Activated T-helper 2 cell treated with anti-CD3 and anti-CD28 coated beads, Interferon-gamma antibody, Interleukin-2, Interleukin-4, amounts not matched to agents 10 μg/mL and 5 μg/mL and 100 μg/mL, durations not matched to agents 14 hours and 24 hours and 36 hours (primary cell): ENCODE measurements at regions of chr11 and their contacts with region 1.

Region 1: DNA sequence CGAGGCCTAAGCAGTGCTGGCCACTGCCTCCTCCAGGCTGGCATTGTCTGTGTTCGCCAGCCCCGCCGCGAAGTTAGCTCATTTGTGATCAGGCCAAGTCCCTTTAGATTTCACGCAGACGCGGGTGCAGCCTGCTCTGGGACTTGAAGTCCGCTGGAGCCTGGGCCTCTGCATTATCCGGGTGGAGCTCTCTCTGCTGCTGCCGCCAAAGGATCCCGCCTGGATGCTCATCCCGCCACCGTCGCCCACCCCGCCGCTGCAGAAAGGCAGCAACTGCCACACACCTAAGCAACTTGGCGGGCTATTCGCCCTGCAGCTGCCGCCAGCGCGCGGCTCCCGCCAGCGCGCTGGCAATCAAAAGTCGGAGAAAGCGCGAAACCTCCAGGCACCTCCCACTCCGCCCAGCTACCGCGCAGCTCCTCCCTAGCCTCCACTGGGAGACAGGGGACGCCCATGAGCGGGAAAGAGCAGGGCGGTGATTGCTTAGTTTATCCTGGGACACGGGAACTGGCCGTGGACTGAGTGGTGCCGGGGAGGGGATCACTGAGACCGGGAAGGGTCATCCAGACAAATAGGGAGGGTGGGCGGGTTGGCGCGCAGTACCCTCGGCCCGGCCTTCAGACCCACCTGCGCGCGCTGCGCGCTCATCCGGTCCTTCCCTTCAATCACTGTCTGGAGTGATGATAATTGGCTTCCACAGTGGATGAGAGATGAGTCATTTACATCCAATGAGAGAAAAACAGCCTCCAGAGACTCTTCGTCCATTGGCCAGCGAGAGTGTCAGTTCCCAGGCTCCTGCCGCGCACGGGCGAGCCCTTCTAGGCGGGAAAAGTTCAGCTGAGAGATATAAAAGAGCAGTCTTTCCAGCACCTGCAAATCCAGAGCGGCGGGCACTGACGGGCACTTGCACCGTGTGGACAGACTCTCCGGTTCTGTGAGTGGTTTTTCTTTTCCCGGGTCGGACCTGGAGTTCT is at the start of gene FAM111B:
- DNase-seq: peak; percentile 79
- H3K4me3 Mint-ChIP-seq: peak within 1 kb of the TSS; percentile 93
- H3K27ac Mint-ChIP-seq: peak within 1 kb of the TSS; percentile 51
- H3K4me1 Mint-ChIP-seq: peaks cover 66% of the 10 kb centered on the region
- H3K27me3 Mint-ChIP-seq: no peaks in the 10 kb centered on the region
- total RNA-seq, gene FAM111B: 57.6 and 59.4 TPM in 2 replicates

Region 2: GRCh38 chr11:59053387-59053786 is 53.3 kb before region 1 on chr11:
- intact Hi-C with region 1: loop called (anchors 5 kb)
- DNase-seq: peak; percentile 54
- H3K4me3 Mint-ChIP-seq: no peak overlapping the region
- H3K27ac Mint-ChIP-seq: no peak overlapping the region
- H3K4me1 Mint-ChIP-seq: peaks cover 4% of the 10 kb centered on the region
- H3K27me3 Mint-ChIP-seq: peaks cover 23% of the 10 kb centered on the region

Region 3: DNA sequence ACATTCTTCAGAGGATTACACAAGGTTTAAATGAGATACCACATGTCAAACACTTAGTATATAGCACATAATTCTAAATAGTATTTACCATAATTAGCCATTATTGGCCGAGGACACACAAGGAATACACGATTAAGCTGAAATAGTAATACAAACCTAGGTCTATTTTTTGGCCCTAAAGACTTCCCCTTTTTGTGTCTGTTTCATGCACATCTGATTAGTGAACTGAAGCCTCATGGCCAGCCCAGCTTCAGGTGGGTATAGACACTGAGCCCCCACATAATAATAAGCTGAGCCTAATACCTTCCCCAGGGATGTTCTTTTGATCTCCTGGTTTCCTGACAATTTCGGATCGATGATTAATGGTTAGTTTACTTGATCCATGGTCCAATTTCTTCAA is 18.5 kb before region 1 on chr11:
- intact Hi-C with region 1: no loop called
- DNase-seq: no peak
- H3K4me3 Mint-ChIP-seq: no peak overlapping the region
- H3K27ac Mint-ChIP-seq: no peak overlapping the region
- H3K4me1 Mint-ChIP-seq: no peaks in the 10 kb centered on the region
- H3K27me3 Mint-ChIP-seq: peaks cover 23% of the 10 kb centered on the region

Region 4: DNA sequence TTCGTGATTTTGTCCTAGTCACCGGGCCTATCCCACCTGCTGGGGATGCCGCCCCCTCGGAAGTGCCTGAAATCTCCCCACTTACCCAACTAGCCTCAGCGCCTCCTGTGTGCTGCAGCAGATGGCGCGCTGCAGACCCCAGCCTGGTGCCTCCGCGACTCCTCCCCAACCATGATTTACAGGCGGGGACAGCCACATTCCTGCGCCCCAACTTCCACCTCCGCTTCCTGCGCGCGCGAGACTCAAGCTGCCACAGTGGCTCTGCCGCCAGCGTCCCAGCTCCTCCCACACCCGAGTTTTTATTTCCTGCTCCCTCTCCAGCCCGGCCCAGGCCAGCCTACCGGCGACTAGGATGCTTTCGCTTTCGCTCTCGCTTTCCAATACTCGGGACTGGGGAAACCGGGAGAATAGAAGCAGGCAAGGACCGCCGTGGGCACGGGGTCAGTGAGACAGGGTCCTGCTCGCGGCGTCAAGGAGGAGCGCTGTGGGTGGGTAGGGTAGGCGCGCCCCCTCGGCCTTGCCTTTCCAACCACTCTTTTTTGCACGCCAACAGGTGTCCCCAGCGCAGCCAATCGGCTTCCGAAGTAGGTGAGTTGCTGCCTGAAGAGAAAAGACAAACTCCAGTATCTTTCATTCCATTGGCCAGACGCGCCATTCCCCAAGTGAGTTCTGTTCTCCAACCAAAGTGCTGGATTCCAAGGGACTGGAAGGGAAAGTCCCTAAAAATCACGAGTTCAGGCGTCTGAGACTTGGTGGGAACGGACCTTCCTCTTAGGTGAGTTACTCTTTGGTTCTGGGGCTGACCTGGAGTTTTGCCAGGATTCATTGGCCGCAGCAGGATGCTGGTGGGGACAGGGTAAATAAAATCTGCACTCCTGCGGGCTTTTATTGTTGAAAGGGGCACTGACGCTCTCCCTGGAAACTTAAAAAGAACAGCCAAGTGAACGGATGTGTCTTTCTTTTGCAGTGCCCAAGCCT is 36.2 kb after region 1 on chr11 and contains the start of gene FAM111A:
- intact Hi-C with region 1: loop called (anchors 1 kb)
- DNase-seq: peak; percentile 87
- H3K4me3 Mint-ChIP-seq: peak within 1 kb of the TSS; percentile 94
- H3K27ac Mint-ChIP-seq: peak within 1 kb of the TSS; percentile 95
- H3K4me1 Mint-ChIP-seq: peaks cover 57% of the 10 kb centered on the region
- H3K27me3 Mint-ChIP-seq: no peaks in the 10 kb centered on the region
- total RNA-seq, gene FAM111A: 66.2 and 69.1 TPM in 2 replicates